Psoas muscle (tissue), 8 donors: ENCODE measurements at regions of chr20 and their contacts with region 1.

Region 1: DNA sequence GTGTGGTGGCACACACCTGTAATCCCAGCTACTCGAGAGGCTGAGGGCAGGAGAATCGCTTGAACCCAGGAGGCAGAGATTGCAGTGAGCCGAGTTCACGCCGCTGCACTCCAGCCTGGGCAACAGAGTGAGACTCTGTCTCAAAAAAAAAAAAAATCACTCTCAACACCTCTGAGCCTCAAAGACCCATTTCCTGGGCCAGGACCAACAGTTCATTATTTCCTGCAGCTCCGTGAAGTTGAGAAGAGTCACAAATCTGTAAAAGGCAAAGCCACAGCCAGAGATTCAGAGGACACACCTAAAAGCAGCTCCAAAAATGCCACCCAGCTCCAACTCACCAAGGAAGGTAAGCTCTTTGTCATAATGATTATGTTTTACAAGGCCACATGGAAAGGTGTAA is 15.2 kb upstream of the NOP56 start:
- DNase-seq: no peak
- ATAC-seq: no peak
- H3K4me3 ChIP-seq: no peak overlapping the region
- H3K27ac ChIP-seq: no peak overlapping the region
- H3K4me1 ChIP-seq: no peaks in the 10 kb centered on the region
- H3K27me3 ChIP-seq: peaks cover 3 to 4% (median 3%) of the 10 kb centered on the region in 3 donors
- CTCF ChIP-seq: no peak

Region 2: DNA sequence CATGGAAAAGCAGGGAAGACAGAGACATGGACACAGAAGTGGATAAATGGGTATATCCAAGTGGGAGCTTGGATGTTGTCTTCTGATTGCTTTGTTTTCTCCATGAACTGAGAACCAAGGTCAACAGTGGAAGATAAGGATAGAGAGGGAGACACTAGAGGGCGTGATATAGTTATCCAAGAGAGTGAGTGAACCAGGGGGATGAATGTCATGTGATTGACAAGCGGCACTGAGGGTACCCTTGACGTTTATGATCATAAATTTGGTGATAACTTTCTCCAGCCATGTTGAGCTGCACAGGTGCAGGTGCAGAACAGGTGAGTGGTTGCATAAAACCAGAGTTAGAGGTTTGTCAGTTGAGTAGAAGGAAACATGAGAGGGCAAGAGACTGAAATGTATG is 76.0 kb after region 1 on chr20:
- intact Hi-C with region 1: loop called in 1 of 2 experiments (anchors 2 kb)
- DNase-seq: no peak
- ATAC-seq: no peak
- H3K4me3 ChIP-seq: no peak overlapping the region
- H3K27ac ChIP-seq: no peak overlapping the region
- H3K4me1 ChIP-seq: no peaks in the 10 kb centered on the region
- H3K27me3 ChIP-seq: peaks cover 0 to 8% (median 0%) of the 10 kb centered on the region in 3 donors
- CTCF ChIP-seq: no peak

Region 3: DNA sequence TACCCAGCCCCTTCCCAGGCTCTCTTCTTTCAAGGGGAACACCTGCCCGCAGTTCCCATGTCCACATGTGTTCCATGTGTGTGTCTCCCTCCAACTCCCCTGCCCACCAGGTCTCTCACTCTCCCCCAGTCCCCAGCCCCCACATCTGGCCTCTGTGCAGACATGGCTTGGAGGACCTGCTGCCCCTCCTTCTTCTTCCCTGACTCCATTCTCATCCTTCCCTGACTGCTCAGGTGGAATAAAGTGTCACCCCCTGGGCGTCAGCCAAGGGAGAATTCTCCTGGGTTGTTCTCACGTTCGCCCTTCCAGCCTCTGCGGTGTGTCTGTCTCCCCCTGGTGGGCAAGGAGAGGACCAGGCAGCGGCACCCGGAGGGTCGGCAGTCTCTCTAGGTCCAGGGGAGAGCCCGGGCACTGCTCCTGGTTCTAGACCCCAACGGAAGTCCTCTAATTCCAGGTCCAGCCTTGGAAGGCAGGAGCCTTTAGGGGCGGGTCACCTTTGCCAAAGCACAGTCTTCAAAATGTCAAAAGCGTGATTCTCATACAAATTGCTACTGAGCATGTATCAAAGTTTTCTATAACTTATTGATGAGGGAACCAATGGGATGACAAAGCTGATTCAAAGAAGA is 105.8 kb after region 1 on chr20:
- intact Hi-C with region 1: no loop called
- DNase-seq: no peak
- ATAC-seq: peak in 2 of 4 donors; percentile 46 to 53
- H3K4me3 ChIP-seq: no peak overlapping the region
- H3K27ac ChIP-seq: no peak overlapping the region
- H3K4me1 ChIP-seq: no peaks in the 10 kb centered on the region
- H3K27me3 ChIP-seq: peaks cover 0 to 42% (median 2%) of the 10 kb centered on the region in 3 donors
- CTCF ChIP-seq: peak; percentile 51